GM12878 (cell line): ENCODE measurements at regions of chr4 and their contacts with region 1.

Region 1: DNA sequence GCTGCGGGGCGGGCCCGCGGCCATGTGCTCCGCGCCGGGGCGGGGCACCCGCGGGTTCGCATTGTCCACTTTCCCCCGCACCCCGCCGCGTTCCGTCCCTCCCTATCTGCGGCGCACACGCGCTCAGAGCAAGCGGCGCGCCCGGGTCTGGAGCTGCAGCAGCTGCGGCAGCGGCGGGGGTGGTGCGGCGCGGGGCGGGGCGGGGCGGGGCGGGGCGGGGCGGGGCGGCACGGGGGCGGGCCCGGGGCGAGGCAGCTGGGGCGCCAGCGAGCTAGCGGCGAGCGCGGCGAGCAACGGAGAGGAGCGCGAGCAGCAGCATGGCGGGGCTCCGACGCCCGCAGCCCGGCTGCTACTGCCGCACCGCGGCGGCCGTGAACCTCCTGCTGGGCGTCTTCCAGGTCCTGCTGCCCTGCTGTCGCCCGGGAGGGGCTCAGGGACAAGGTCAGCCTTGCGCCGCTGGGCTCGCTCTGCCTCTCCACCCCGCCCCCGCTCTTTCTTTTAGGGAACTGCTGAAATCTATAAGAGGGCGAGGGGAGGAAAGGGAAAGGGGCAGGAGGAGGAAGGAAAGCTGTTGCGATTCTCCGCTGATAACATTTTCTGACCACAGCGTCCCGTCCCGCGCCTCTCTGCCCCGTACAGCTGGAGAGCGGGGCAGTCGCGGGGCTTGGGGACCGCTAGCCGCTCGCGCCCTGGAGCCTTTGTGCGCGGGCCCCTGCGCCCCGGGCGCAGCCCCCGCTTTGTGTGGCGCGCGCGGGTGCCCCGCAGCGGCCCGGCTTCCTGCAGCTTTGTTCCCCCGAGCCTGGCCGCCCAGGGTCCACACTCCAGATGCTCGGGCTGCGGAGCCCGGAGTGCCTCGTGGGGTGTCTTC is at the start of gene TMEM131L:
- DNase-seq: no peak
- ATAC-seq: peak; percentile 62
- H3K4me3 ChIP-seq: peak within 1 kb of the TSS; percentile 98
- H3K27ac ChIP-seq: peak within 1 kb of the TSS; percentile 88
- H3K4me1 ChIP-seq: peaks cover 18% of the 10 kb centered on the region
- H3K27me3 ChIP-seq: no peaks in the 10 kb centered on the region
- CTCF ChIP-seq: peak in 2 of 3 experiments; percentile 35 to 40; a peak in 3 of 6 replicates
- EP300 ChIP-seq: no peak; a peak in 1 of 4 replicates
- POLR2A ChIP-seq: peak; percentile 93
- RAD21 ChIP-seq: no peak; the same call in 1 of the 2 replicates
- polyA plus RNA-seq, gene TMEM131L: 8.5 to 9.5 TPM

Region 2: DNA sequence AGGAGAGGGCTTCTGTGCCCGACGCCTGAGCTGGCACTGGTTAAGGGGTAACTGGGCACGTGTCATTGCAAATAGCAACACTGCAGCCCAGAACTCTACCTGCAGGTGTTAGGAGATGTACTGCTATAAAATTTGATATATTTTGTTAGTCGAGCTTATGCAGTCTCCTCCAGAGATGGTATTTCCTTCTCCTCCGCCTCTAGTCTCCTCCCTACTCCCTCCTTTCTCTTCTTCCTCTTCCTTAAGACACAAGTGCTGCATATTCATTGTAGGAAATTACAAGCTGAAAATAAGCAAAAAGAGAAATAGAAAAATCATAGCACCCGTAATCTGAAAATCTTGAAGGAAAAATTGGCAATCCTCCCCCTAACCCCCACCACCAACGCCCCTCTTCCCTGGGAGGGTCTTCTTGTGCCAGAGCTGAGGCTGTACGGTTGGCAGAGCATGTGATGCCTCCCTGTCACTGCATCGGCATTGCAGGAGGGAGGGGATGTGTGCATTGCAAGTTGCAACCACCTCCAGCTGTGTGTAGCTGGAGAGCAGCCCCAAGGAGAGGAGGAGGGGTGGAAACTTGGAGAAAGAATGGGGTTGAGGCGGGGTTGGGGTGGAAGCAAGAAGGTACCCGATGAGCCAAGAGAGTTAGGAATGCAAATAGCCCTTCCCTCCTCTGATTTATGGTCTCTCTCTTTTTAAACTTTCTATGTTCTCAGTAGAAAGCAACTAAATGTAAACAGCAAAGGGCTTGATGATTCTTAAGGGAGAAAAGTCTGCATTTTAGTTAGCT is 170.1 kb before region 1 on chr4:
- CTCF ChIA-PET with region 1: no interaction called
- POLR2A ChIA-PET with region 1: no interaction called
- RAD21 ChIA-PET with region 1: no interaction called
- SMC1A ChIA-PET with region 1: no interaction called
- in situ Hi-C with region 1: no loop called
- intact Hi-C with region 1: no loop called
- DNase-seq: no peak
- ATAC-seq: no peak
- H3K4me3 ChIP-seq: no peak overlapping the region
- H3K27ac ChIP-seq: no peak overlapping the region
- H3K4me1 ChIP-seq: no peaks in the 10 kb centered on the region
- H3K27me3 ChIP-seq: no peaks in the 10 kb centered on the region
- CTCF ChIP-seq: no peak
- EP300 ChIP-seq: no peak
- POLR2A ChIP-seq: no peak
- RAD21 ChIP-seq: no peak

Region 3: GRCh38 chr4:153438916-153439756 is 27.2 kb before region 1 on chr4:
- CTCF ChIA-PET with region 1: interaction called, 55 read pairs
- POLR2A ChIA-PET with region 1: interaction called, 16 read pairs
- RAD21 ChIA-PET with region 1: interaction called, 81 read pairs
- SMC1A ChIA-PET with region 1: interaction called, 46 read pairs
- in situ Hi-C with region 1: no loop called
- intact Hi-C with region 1: loop called (anchors 1 kb)
- DNase-seq: peak; percentile 79
- ATAC-seq: peak; percentile 76
- H3K4me3 ChIP-seq: peak overlapping the region; percentile 65
- H3K27ac ChIP-seq: peak overlapping the region; percentile 80
- H3K4me1 ChIP-seq: peaks cover 38% of the 10 kb centered on the region
- H3K27me3 ChIP-seq: no peaks in the 10 kb centered on the region
- CTCF ChIP-seq: 0 out of 6 replicates have a peak, but pooled peaks of 1 of the 3 experiments have one; percentile 4
- EP300 ChIP-seq: no peak
- POLR2A ChIP-seq: no peak
- RAD21 ChIP-seq: no peak

Region 4: DNA sequence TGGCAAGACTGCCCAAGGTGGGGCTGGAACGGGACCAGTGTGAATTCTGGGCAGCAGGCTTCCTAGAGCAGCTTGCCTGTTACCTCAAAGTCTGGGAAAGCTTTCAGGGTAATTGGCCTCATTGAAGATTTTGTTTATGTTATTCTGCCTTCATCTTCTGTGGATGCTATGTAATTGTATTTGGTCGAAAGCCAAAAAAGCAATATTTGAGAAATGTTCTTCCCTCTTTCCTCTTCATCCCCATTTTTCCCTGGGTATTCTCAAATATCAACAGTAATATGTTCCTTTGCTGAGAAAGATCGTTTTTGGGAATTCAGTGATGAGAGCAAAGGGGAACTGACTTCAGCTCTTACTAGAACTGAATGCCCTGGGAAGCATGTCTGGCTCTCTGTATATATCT is 12.8 kb after region 1 on chr4:
- CTCF ChIA-PET with region 1: interaction called, 54 read pairs
- POLR2A ChIA-PET with region 1: interaction called, 33 read pairs
- RAD21 ChIA-PET with region 1: interaction called, 118 read pairs
- SMC1A ChIA-PET with region 1: interaction called, 57 read pairs
- in situ Hi-C with region 1: no loop called
- intact Hi-C with region 1: no loop called
- DNase-seq: no peak
- ATAC-seq: no peak
- H3K4me3 ChIP-seq: peak overlapping the region; percentile 48; the same call in 1 of the 2 replicates
- H3K27ac ChIP-seq: peak overlapping the region; percentile 62
- H3K4me1 ChIP-seq: peaks cover 59% of the 10 kb centered on the region
- H3K27me3 ChIP-seq: no peaks in the 10 kb centered on the region
- CTCF ChIP-seq: no peak
- EP300 ChIP-seq: no peak
- POLR2A ChIP-seq: no peak
- RAD21 ChIP-seq: no peak

Region 5: GRCh38 chr4:153521999-153522801 is 55.9 kb after region 1 on chr4:
- CTCF ChIA-PET with region 1: interaction called, 13 read pairs
- POLR2A ChIA-PET with region 1: interaction called, 24 read pairs
- RAD21 ChIA-PET with region 1: interaction called, 57 read pairs
- SMC1A ChIA-PET with region 1: interaction called, 60 read pairs
- in situ Hi-C with region 1: no loop called
- intact Hi-C with region 1: loop called (anchors 1 kb)
- DNase-seq: peak; percentile 71
- ATAC-seq: peak; percentile 54
- H3K4me3 ChIP-seq: peak overlapping the region; percentile 59
- H3K27ac ChIP-seq: peak overlapping the region; percentile 96
- H3K4me1 ChIP-seq: peaks cover 85% of the 10 kb centered on the region
- H3K27me3 ChIP-seq: no peaks in the 10 kb centered on the region
- CTCF ChIP-seq: no peak
- EP300 ChIP-seq: no peak; a peak in 1 of 4 replicates
- POLR2A ChIP-seq: peak; percentile 56; the same call in 1 of the 2 replicates
- RAD21 ChIP-seq: no peak

Region 6: DNA sequence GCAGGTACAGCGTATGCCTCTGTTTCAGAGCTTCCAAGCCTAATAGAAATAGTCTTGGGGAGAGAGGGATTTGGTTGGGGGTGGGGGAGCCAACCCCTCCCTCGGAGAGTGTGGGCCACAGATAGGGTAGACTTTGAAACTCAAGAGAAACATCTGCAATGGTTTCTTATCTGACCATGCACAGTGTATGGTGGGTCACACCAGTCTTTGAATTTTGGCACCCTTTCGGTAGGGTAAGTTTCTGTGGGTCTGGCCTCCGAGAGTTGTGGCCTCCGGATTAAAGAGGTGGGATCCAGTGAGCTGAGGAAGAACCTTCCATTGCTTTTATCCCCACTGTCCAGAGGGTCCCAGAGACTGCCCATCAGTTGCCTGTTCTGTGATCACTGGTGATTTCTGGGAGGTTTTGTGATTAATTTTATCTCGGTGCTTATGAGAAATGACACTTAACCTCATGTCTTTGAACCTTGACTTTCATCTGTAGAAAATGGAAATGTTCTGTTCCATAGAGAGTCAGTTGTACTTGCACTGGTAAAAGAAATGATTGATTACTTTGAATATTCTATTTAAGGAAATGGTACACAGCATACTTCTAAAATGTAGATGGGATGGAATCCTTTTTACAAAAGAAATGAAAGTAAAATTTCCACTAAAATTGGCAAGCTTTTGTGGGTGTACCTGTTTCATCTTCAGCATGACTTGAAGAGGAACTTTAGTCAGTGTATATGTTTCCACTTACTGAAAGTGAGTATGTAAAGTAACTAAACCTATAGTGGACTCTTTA is 62.6 kb after region 1 on chr4:
- CTCF ChIA-PET with region 1: interaction called, 10 read pairs
- POLR2A ChIA-PET with region 1: interaction called, 24 read pairs
- RAD21 ChIA-PET with region 1: interaction called, 57 read pairs
- SMC1A ChIA-PET with region 1: interaction called, 60 read pairs
- in situ Hi-C with region 1: no loop called
- intact Hi-C with region 1: no loop called
- DNase-seq: no peak
- ATAC-seq: peak; percentile 73
- H3K4me3 ChIP-seq: peak overlapping the region; percentile 58
- H3K27ac ChIP-seq: peak overlapping the region; percentile 77
- H3K4me1 ChIP-seq: peaks cover 77% of the 10 kb centered on the region
- H3K27me3 ChIP-seq: no peaks in the 10 kb centered on the region
- CTCF ChIP-seq: no peak
- EP300 ChIP-seq: no peak
- POLR2A ChIP-seq: no peak
- RAD21 ChIP-seq: no peak

Region 7: GRCh38 chr4:153535772-153536513 is 69.6 kb after region 1 on chr4:
- CTCF ChIA-PET with region 1: interaction called, 10 read pairs
- POLR2A ChIA-PET with region 1: interaction called, 3 read pairs
- RAD21 ChIA-PET with region 1: interaction called, 7 read pairs
- SMC1A ChIA-PET with region 1: interaction called, 10 read pairs
- in situ Hi-C with region 1: no loop called
- intact Hi-C with region 1: no loop called
- DNase-seq: no peak
- ATAC-seq: peak; percentile 53
- H3K4me3 ChIP-seq: no peak overlapping the region
- H3K27ac ChIP-seq: no peak overlapping the region
- H3K4me1 ChIP-seq: peaks cover 18% of the 10 kb centered on the region
- H3K27me3 ChIP-seq: no peaks in the 10 kb centered on the region
- CTCF ChIP-seq: 0 out of 6 replicates have a peak, but pooled peaks have one; percentile 4 to 21 (median 5)
- EP300 ChIP-seq: no peak
- POLR2A ChIP-seq: no peak
- RAD21 ChIP-seq: no peak

Region 8: DNA sequence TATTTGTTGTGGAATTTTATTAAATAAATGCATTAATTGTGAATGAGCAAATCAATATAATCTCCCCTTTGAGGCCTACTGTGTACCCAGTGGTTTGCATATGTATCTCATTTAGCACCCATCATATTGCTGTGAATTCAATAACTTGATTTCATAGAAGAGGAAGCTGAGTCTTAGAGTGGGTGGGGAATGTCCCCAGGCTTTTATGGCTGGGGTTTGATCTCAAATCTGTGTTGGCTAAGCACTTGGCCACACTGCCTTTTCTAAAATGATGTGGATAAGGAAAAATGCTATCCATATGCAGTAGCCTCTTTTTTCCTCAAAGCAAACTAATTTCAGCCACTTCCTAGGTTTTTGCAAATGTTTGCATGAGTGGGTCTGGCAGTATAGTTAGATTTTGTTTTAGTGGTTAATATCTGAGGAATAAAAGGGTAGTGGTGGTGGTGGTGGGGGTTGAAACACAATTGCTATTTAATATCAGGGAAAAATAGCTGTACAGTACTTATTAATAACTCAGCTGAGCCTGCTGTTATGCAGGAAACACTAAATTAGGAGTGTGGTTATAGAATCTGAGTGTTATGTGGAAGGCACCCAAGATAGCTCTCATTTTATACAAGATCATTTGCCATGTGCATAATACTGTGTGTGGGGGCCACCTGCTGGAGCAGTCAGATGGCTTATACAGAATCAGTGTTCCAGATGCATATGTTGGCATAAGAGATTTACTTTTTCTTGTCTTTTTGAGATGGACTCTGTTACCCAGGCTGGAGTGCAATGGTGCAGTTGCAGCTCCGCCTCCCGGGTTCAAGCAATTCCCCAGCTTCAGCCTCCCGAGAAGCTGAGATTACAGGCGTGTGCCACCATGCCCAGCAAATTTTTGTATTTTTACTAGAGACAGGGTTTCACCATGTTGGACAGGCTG is 107.8 kb after region 1 on chr4:
- CTCF ChIA-PET with region 1: interaction called, 15 read pairs
- POLR2A ChIA-PET with region 1: interaction called, 7 read pairs
- RAD21 ChIA-PET with region 1: interaction called, 35 read pairs
- SMC1A ChIA-PET with region 1: interaction called, 19 read pairs
- in situ Hi-C with region 1: no loop called
- intact Hi-C with region 1: no loop called
- DNase-seq: no peak
- ATAC-seq: peak; percentile 60
- H3K4me3 ChIP-seq: no peak overlapping the region
- H3K27ac ChIP-seq: peak overlapping the region; percentile 48
- H3K4me1 ChIP-seq: peaks cover 50% of the 10 kb centered on the region
- H3K27me3 ChIP-seq: no peaks in the 10 kb centered on the region
- CTCF ChIP-seq: peak; percentile 41 to 65 (median 53)
- EP300 ChIP-seq: no peak
- POLR2A ChIP-seq: no peak
- RAD21 ChIP-seq: peak; percentile 81